ENCODE measurements at regions of chr5 and their contacts with region 1.

Region 1: DNA sequence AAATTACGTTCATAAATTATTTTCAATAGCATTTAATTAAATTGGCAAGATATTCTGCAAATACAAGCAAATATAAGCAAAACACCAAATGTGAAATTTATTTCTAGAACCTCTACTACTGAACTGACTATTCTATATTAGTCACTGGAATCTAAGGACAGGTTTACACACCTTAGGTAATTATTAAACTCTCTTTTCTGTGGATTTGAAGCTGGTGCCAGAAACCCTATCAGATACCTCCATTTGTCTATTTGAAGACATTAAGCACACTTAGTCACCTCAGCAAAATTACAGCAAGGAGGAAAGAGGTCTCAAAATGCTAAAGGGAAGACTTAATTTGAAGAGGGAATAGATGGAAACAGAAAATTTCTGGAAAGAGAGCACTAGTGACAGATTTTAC is 83.4 kb downstream of the CPLANE1 start:
- DNase-seq: no peak
- ATAC-seq: no peak
- H3K4me3 ChIP-seq: no peak overlapping the region
- H3K27ac ChIP-seq: no peak overlapping the region
- H3K4me1 ChIP-seq: no peaks in the 10 kb centered on the region
- H3K27me3 ChIP-seq: no peaks in the 10 kb centered on the region
- CTCF ChIP-seq: no peak
- POLR2A ChIP-seq: no peak

Region 2: GRCh38 chr5:36724467-36725332 is 441.1 kb before region 1 on chr5:
- in situ Hi-C with region 1: no loop called
- intact Hi-C with region 1: no loop called
- DNase-seq: peak in 1 of 2 donors; percentile 17
- ATAC-seq: peak in 1 of 2 donors; percentile 58
- H3K4me3 ChIP-seq: no peak overlapping the region
- H3K27ac ChIP-seq: no peak overlapping the region
- H3K4me1 ChIP-seq: peaks cover 0 to 6% of the 10 kb centered on the region in 2 donors
- H3K27me3 ChIP-seq: no peaks in the 10 kb centered on the region
- CTCF ChIP-seq: no peak
- POLR2A ChIP-seq: peak in 1 of 2 donors; percentile 17

Region 3: DNA sequence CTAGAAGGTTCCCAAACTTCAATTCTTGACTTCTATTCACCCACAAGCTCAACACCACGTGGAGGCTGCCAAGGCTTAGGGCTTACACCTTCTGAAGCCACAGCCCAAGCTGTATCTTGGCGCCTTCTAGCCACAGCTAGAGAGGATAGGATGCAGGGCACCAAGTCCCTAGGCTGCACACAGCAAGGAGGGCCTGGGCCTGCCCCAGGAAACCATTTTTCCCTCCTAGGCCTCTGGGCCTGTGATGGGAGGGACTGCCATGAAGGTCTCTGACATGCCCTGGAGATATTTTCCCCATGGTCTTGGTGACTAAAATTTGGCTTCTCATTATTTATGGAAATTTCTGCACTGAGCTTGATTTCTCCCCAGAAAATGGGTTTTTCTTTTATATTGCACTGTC is 29.1 kb before region 1 on chr5:
- in situ Hi-C with region 1: no loop called
- intact Hi-C with region 1: loop called (anchors 1 kb)
- DNase-seq: no peak
- ATAC-seq: no peak
- H3K4me3 ChIP-seq: no peak overlapping the region
- H3K27ac ChIP-seq: no peak overlapping the region
- H3K4me1 ChIP-seq: no peaks in the 10 kb centered on the region
- H3K27me3 ChIP-seq: no peaks in the 10 kb centered on the region
- CTCF ChIP-seq: no peak
- POLR2A ChIP-seq: no peak

Measured in gastrocnemius medialis (tissue), 4 donors.